Mammary epithelial cell (primary cell): ENCODE measurements at regions of chr16 and their contacts with region 1.

Region 1: GRCh38 chr16:81451753-81452680 is 7.4 kb downstream of the CMIP start:
- DNase-seq: no peak
- H3K4me3 ChIP-seq: no peak overlapping the region
- H3K27ac ChIP-seq: no peak overlapping the region
- H3K4me1 ChIP-seq: peaks cover 33% of the 10 kb centered on the region
- H3K27me3 ChIP-seq: no peaks in the 10 kb centered on the region
- CTCF ChIP-seq: no peak

Region 2: GRCh38 chr16:81283044-81283443 is 169.0 kb before region 1 on chr16:
- CTCF ChIA-PET with region 1: no interaction called
- dilution Hi-C with region 1: no loop called
- in situ Hi-C with region 1: no loop called
- intact Hi-C with region 1: no loop called
- DNase-seq: no peak
- H3K4me3 ChIP-seq: no peak overlapping the region
- H3K27ac ChIP-seq: no peak overlapping the region
- H3K4me1 ChIP-seq: no peaks in the 10 kb centered on the region
- H3K27me3 ChIP-seq: no peaks in the 10 kb centered on the region
- CTCF ChIP-seq: no peak

Region 3: DNA sequence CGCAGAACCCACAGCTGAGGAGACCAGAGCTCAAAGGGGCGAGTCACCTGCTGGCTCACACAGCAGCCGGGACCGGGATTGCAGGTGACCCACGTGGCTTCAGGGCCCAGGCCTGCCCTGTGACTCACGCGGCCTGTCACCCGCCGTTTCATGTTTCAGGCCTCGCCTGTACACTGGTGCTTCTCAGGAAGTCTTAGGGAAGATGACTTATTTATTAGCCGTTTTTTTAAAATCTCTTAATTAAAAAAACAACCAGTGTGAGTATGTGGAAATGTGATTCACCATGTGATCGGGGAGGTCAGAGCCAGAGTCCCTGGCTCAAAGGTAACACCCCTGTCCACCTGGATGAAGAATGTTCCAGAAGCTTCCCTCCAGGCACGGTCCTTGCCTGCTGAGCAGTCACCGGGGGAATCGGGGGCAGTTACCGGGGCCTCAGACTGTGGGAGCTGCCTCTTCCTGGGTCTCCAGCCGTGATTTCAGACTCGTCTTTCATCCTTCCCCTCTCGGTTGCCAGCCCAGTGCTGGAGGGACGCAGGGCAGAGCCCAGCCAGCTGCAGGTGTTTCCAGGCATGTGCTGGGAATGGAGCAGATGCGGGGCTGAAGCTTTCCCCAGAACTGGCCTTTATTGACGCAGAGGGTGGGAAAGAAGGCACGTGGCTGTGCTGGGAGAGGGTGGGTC is 41.9 kb after region 1 on chr16:
- CTCF ChIA-PET with region 1: no interaction called
- dilution Hi-C with region 1: loop called (anchors 5 kb)
- in situ Hi-C with region 1: no loop called
- intact Hi-C with region 1: loop called (anchors 2 kb)
- DNase-seq: peak; percentile 97
- H3K4me3 ChIP-seq: no peak overlapping the region
- H3K27ac ChIP-seq: peak overlapping the region; percentile 90
- H3K4me1 ChIP-seq: peaks cover 56% of the 10 kb centered on the region
- H3K27me3 ChIP-seq: no peaks in the 10 kb centered on the region
- CTCF ChIP-seq: no peak

Region 4: GRCh38 chr16:81600901-81601428 is 148.9 kb after region 1 on chr16:
- CTCF ChIA-PET with region 1: interaction called, 14 read pairs
- dilution Hi-C with region 1: no loop called
- in situ Hi-C with region 1: no loop called
- intact Hi-C with region 1: no loop called
- DNase-seq: peak; percentile 97
- H3K4me3 ChIP-seq: no peak overlapping the region
- H3K27ac ChIP-seq: peak overlapping the region; percentile 93
- H3K4me1 ChIP-seq: peaks cover 54% of the 10 kb centered on the region
- H3K27me3 ChIP-seq: no peaks in the 10 kb centered on the region
- CTCF ChIP-seq: no peak

Region 5: GRCh38 chr16:81632392-81633146 is 180.6 kb after region 1 on chr16:
- CTCF ChIA-PET with region 1: no interaction called
- dilution Hi-C with region 1: no loop called
- in situ Hi-C with region 1: no loop called
- intact Hi-C with region 1: no loop called
- DNase-seq: no peak
- H3K4me3 ChIP-seq: no peak overlapping the region
- H3K27ac ChIP-seq: no peak overlapping the region
- H3K4me1 ChIP-seq: peaks cover 4% of the 10 kb centered on the region
- H3K27me3 ChIP-seq: no peaks in the 10 kb centered on the region
- CTCF ChIP-seq: no peak

Region 6: DNA sequence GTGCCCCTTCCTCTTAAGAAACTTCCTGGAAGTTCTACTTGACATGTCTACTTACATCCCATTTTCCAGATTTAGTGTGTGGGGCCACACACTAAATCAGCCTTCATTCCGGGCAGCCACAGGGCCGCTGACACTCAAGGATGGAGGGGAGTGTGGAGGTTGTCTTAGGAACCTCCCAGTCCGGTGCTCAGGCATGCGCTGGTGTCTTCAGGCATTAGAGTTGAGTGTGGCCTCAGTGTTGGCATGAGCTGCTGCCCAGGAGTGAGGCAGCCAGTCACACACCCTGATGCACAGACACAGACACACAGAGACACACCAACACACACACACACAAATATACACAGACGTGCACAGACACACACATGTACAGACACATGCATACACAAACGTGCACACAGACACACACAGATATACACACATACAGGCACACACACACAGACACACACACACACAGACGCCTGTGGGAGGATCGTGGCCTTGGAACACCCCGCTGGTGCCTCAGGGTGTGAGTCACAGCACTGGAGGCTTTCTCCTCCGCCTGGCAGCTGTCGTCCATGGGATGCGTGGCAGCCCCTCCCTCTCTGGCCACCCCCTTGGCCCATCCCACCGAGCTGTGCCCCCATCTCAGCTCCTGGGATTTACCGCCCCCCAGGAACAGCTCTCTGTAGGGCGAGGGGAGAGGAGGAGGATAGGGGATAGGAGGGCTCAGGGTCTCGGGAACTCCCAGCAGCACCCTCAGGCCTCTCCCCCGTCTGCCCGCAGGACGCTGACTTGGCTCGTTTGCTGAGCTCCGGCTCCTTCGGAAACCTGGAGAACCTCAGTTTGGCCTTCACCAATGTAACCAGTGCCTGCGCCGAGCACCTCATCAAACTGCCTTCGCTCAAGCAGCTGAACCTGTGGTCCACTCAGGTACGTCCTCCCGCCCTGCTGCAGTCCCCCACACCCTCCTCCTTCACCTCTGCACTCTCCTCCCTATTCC is 251.4 kb after region 1 on chr16:
- CTCF ChIA-PET with region 1: no interaction called
- dilution Hi-C with region 1: loop called (anchors 5 kb)
- in situ Hi-C with region 1: no loop called
- intact Hi-C with region 1: no loop called
- DNase-seq: peak; percentile 59
- H3K4me3 ChIP-seq: no peak overlapping the region
- H3K27ac ChIP-seq: no peak overlapping the region
- H3K4me1 ChIP-seq: peaks cover 13% of the 10 kb centered on the region
- H3K27me3 ChIP-seq: no peaks in the 10 kb centered on the region
- CTCF ChIP-seq: no peak